Activated CD8-positive, alpha-beta T cell treated with anti-CD3 and anti-CD28 coated beads for 36 hours (primary cell): ENCODE measurements at regions of chr12 and their contacts with region 1.

Region 1: GRCh38 chr12:46268590-46269558 is at the start of gene SLC38A1:
- DNase-seq: peak; percentile 92
- ATAC-seq: peak; percentile 57
- H3K4me3 Mint-ChIP-seq: no peak within 1 kb of the TSS
- H3K27ac Mint-ChIP-seq: no peak within 1 kb of the TSS
- H3K4me1 Mint-ChIP-seq: peaks cover 29% of the 10 kb centered on the region
- H3K27me3 Mint-ChIP-seq: no peaks in the 10 kb centered on the region
- CTCF ChIP-seq: no peak
- total RNA-seq, gene SLC38A1: 167 to 168 TPM

Region 2: DNA sequence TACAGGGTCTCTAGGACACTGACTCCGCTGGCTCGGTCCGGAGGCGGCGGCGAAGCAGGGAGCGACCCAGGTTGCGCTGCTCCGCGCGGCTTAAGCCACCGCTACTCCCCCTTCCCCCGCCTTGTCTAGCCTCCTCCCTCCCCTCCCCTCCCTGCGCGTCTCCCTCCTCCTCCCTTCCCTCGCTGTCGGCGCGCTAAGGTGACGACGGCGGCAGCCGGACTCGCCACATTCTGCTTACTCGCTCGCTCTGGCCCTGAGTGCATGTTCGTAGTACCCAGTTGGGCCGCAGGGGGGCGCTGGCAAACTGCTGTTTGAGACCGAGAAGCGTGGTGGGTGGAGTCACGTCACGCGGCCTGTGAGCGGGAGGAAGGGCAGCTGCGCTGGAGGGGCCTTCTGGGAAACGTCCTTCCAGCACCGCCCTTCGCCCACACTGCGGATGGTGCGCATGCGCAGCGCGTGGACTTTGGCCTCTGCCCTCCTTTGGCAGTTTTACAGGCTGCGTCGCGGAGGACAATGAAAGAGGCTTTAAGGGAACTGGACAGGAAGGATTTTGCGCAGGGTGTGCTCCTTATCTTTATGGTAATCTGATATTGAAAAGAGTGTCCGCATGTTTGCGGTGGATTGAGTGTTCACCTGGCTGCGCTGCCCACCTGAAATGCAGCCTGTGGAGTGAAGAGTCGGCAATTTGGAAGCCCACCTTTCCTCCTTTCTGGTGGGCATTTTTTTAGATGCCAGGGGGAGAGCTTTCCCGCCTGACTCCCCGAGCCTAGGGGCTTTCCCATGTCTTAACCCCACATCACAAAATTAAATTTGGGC is 278.2 kb before region 1 on chr12 and contains the start of gene SCAF11:
- CTCF ChIA-PET with region 1: no interaction called
- POLR2A ChIA-PET with region 1: interaction called, 21 read pairs
- intact Hi-C with region 1: no loop called
- DNase-seq: peak; percentile 100
- ATAC-seq: peak; percentile 87
- H3K4me3 Mint-ChIP-seq: peak within 1 kb of the TSS; percentile 87
- H3K27ac Mint-ChIP-seq: peak within 1 kb of the TSS; percentile 98
- H3K4me1 Mint-ChIP-seq: peaks cover 36% of the 10 kb centered on the region
- H3K27me3 Mint-ChIP-seq: no peaks in the 10 kb centered on the region
- CTCF ChIP-seq: peak; percentile 74
- total RNA-seq, gene SCAF11: 110 to 117 TPM

Region 3: DNA sequence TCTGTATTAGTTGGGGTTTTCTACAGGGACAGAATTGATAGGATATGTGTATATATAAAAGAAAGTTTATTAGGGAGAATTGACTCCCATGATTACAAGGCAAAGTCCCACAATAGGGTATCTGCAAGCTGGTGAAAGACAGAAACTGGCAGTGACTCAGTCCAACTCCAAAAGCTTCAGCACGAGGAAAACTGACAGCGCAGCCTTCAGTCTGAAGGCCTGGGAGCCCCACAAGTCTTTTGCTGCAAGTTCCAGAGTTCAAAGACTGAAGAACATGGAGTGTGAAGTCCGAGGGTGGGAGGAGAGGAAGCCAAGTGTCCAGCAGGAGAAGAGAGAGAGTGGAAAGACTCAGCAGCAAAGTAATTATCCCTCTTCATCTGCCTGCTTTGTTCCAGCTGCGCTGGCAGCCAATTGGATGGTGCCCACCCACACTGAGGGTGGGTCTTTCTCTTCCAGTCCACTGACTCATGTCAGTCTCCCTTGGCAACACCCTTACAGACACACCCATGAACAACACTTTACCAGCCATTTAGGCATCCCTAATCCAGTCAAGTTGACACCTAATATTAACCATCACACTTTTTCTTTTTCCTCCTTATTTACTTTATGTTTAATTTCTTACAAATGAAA is 167.9 kb before region 1 on chr12:
- CTCF ChIA-PET with region 1: no interaction called
- POLR2A ChIA-PET with region 1: no interaction called
- intact Hi-C with region 1: no loop called
- DNase-seq: no peak
- ATAC-seq: no peak
- H3K4me3 Mint-ChIP-seq: no peak overlapping the region
- H3K27ac Mint-ChIP-seq: no peak overlapping the region
- H3K4me1 Mint-ChIP-seq: no peaks in the 10 kb centered on the region
- H3K27me3 Mint-ChIP-seq: peaks cover 6% of the 10 kb centered on the region
- CTCF ChIP-seq: no peak

Region 4: DNA sequence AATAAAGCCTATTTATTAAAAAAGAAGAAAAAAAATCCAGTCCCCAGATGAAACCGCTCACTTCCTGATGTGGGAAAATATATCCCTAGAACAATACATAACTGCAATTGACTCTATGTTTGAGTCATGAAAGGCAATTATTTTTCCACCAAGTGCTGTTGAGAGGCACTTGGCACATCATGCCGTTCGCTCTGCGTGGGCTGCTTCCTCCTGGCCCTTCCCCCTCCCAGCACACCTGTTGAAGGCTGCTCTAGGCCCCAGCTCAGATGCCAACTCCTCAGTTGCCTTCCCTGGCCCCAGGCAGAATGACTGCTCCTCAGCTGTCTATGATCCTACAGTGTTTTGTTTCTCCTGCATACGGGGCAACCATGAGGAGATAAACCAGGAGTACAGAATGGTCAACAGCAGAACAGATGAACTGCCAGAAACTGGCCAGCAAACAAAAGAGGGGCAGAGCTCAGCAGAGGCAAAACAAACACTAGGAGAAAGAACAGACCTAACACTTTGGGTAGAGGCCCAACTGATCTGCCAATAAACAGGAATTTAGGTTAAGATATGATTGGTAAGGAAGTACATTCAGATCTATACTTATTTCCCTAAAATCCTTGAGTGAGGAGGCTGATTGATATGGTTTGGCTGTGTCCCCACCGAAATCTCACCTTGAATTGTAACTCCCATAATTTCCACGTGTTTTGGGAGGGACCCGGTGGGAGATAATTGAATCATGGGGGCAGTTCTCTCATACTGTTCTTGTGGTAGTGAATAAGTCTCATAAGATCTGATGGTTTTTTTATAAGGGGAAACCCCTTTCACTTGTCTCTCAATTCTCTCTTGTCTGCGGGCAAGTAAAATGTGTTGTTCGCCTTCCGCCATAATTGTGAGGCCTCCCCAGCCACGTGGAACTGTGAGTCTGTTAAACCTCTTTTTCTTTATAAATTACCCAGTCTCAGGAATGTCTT is 58.7 kb before region 1 on chr12:
- CTCF ChIA-PET with region 1: interaction called, 6 read pairs
- POLR2A ChIA-PET with region 1: interaction called, 168 read pairs
- intact Hi-C with region 1: loop called (anchors 2 kb)
- DNase-seq: peak; percentile 90
- ATAC-seq: peak; percentile 77
- H3K4me3 Mint-ChIP-seq: peak overlapping the region; percentile 61
- H3K27ac Mint-ChIP-seq: peak overlapping the region; percentile 97
- H3K4me1 Mint-ChIP-seq: peaks cover 91% of the 10 kb centered on the region
- H3K27me3 Mint-ChIP-seq: no peaks in the 10 kb centered on the region
- CTCF ChIP-seq: no peak

Region 5: DNA sequence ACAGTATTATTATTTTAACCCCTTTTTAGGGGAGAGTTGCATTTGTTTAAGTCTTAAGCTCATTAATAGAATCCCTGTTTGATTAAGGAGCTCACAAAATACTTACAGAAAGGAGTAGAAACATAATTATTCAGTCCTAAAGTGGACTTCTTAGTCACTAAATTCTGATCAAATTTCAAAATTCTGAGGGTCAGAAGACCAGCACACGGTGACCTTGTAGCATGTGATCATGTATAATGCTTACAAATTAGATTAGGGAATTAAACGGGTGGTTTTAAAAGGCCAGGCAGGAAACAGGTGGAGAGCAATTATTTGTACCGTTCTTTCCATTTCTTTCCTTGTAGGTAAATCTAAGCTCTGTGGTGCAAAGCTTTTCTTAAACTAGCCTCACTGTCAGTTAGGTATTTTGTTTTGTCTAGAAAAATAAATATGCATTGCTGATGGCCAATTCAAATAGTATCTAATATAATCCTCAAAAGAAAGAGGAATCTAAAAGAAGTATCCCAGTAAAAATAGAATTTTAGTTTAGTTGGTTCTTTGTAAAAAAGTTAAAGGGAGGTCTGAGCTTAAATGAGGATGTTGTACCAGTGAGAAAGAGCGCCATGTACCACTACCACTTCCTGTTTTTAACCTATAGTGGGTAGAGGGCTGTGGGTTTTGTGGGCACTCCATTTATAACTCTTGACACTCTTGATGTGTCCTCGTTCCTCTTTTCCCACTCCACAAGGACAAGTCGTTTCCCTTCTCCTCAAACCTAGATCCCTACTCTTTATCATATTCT is 51.1 kb before region 1 on chr12:
- CTCF ChIA-PET with region 1: interaction called, 14 read pairs
- POLR2A ChIA-PET with region 1: interaction called, 168 read pairs
- intact Hi-C with region 1: loop called (anchors 2 kb)
- DNase-seq: peak; percentile 86
- ATAC-seq: no peak
- H3K4me3 Mint-ChIP-seq: peak overlapping the region; percentile 70
- H3K27ac Mint-ChIP-seq: peak overlapping the region; percentile 99
- H3K4me1 Mint-ChIP-seq: peaks cover 95% of the 10 kb centered on the region
- H3K27me3 Mint-ChIP-seq: no peaks in the 10 kb centered on the region
- CTCF ChIP-seq: no peak

Region 6: GRCh38 chr12:46224386-46224785 is 44.5 kb before region 1 on chr12:
- CTCF ChIA-PET with region 1: interaction called, 14 read pairs
- POLR2A ChIA-PET with region 1: interaction called, 168 read pairs
- intact Hi-C with region 1: loop called (anchors 2 kb)
- DNase-seq: no peak
- ATAC-seq: no peak
- H3K4me3 Mint-ChIP-seq: no peak overlapping the region
- H3K27ac Mint-ChIP-seq: peak overlapping the region; percentile 83
- H3K4me1 Mint-ChIP-seq: peaks cover 81% of the 10 kb centered on the region
- H3K27me3 Mint-ChIP-seq: no peaks in the 10 kb centered on the region
- CTCF ChIP-seq: no peak

Region 7: GRCh38 chr12:47556261-47557030 is 1287.6 kb after region 1 on chr12:
- CTCF ChIA-PET with region 1: no interaction called
- POLR2A ChIA-PET with region 1: no interaction called
- intact Hi-C with region 1: no loop called
- DNase-seq: peak; percentile 16
- ATAC-seq: no peak
- H3K4me3 Mint-ChIP-seq: no peak overlapping the region
- H3K27ac Mint-ChIP-seq: peak overlapping the region; percentile 6
- H3K4me1 Mint-ChIP-seq: peaks cover 32% of the 10 kb centered on the region
- H3K27me3 Mint-ChIP-seq: no peaks in the 10 kb centered on the region
- CTCF ChIP-seq: no peak